Heart right ventricle (tissue), 16 donors: ENCODE measurements at regions of chr13 and their contacts with region 1.

Region 1: GRCh38 chr13:24683838-24684599 is 3.8 kb downstream of the ATP12A start:
- DNase-seq: peak; percentile 43 to 61
- ATAC-seq: peak; percentile 54 to 87 (median 80)
- H3K4me3 ChIP-seq: no peak overlapping the region
- H3K27ac ChIP-seq: no peak overlapping the region
- H3K4me1 ChIP-seq: peaks cover 0 to 27% (median 12%) of the 10 kb centered on the region in 9 donors
- H3K27me3 ChIP-seq: peaks cover 12 to 45% (median 35%) of the 10 kb centered on the region in 7 donors
- CTCF ChIP-seq: peak; percentile 67 to 90 (median 80)

Region 2: GRCh38 chr13:24734950-24735349 is 50.9 kb after region 1 on chr13:
- intact Hi-C with region 1: loop called in 1 of 10 experiments (anchors 10 kb)
- DNase-seq: no peak
- ATAC-seq: no peak
- H3K4me3 ChIP-seq: no peak overlapping the region
- H3K27ac ChIP-seq: no peak overlapping the region
- H3K4me1 ChIP-seq: no peaks in the 10 kb centered on the region
- H3K27me3 ChIP-seq: no peaks in the 10 kb centered on the region
- CTCF ChIP-seq: no peak